Esophagus squamous epithelium (tissue), 5 donors: ENCODE measurements at regions of chr7 and their contacts with region 1.

Region 1: DNA sequence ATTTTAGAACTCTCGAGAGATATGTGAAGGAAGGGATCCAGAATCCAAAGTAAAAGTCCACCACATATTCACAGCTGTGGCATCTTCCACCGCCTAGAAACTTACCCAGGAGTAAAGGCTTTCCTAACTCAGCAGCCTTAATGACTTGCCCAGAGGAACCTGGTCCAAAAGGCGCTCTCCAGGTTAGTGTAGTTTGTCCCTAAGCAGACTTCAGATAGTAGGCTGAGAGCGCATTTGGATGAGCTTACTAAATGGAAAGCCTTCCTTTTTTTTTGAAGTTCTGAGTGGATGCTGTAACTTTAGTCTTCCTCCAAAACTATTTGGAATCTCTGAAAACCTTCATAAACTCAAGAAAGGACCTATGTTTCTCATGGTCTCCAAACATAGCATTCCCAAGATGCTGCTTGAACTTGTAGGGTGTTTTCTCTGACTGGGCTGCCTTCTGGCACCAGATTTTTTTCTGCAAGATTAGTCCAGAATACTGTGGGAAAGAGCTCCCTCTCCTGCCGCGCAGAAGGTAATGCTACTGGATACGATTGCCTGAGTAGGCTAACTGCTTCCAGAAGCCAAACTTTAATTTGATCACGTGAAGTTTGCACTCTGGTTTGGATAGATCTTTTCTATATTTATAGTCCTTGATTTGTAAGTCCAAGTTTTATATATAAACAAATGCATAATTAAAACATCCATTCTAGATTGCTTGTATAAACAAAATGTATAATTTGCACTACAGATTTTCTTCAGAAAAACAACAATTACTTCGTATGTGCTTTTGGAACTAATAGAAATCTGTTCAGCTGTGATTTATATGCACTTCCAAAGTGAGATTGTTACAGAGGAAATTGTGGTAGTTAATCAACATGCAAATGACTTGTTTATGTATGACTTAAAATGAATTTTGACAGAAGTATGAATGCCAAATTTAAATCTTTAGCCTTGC is 19.6 kb upstream of the GPR37 start:
- DNase-seq: no peak
- H3K4me3 ChIP-seq: no peak overlapping the region
- H3K27ac ChIP-seq: no peak overlapping the region
- H3K4me1 ChIP-seq: no peaks in the 10 kb centered on the region
- H3K27me3 ChIP-seq: peaks cover 0 to 9% (median 0%) of the 10 kb centered on the region in 4 donors
- CTCF ChIP-seq: peak; percentile 37 to 80 (median 58)
- POLR2A ChIP-seq: no peak

Region 2: GRCh38 chr7:124152859-124153692 is 632.1 kb before region 1 on chr7:
- intact Hi-C with region 1: loop called (anchors 10 kb)
- DNase-seq: no peak
- H3K4me3 ChIP-seq: no peak overlapping the region
- H3K27ac ChIP-seq: no peak overlapping the region
- H3K4me1 ChIP-seq: no peaks in the 10 kb centered on the region
- H3K27me3 ChIP-seq: no peaks in the 10 kb centered on the region
- CTCF ChIP-seq: peak in 1 of 6 experiments; percentile 40
- POLR2A ChIP-seq: no peak